ENCODE measurements at regions of chr2 and their contacts with region 1.

Region 1: DNA sequence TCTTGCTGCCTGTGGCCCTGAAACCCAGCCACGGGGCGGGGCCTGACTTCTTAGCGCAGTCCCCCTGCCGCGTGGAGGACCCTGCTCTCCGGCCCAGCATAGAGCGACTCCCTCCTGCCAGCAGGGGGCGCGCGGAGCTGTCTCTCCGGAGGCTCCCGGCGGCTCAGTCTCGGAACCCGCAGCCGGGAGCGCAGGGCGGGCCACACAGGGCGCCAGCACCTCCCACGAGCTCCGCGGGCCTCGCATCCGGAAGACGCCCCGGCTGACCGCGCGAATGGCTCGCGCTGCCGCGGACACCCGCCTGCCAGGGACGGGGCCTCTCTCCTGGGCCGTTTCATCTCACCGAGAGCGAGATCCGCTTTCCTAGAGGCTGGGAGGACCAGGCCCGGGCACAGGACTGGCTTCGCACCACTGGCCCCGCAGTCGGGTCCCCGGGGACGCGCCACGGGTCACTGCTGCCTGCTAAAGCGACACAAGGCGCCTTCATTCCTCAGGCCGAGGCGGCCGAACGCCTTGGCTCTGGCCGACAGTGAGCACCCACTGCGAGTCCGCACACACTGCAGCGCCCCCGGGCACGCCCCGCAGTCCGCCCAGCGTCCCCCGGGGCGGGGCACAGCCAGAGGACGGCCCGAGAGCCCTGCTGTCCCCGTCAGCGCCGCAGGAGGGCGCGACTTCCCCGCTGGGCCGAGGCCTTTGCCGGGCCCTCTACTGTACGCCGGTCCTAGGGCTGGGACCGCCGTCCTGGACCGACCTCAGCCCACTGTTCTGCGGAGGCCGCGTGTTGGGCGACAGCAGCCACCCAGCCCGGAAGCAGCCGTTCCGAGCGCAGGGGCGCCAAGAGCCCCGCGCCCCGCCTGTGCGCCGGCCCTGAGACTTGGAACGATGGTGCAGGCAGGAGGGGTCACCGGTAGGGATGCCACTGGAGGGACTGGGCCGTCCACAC is 39.0 kb upstream of the ARHGEF4 start:
- DNase-seq: peak; percentile 94
- H3K4me3 ChIP-seq: peak overlapping the region; percentile 66 to 86 (median 82)
- H3K27ac ChIP-seq: peak overlapping the region; percentile 89 to 98 (median 94)
- H3K4me1 ChIP-seq: peaks cover 11 to 19% (median 17%) of the 10 kb centered on the region in 4 donors
- H3K27me3 ChIP-seq: peaks cover 0 to 6% (median 0%) of the 10 kb centered on the region in 4 donors
- CTCF ChIP-seq: peak; percentile 82 to 89 (median 86)
- EP300 ChIP-seq: no peak
- POLR2A ChIP-seq: no peak

Region 2: DNA sequence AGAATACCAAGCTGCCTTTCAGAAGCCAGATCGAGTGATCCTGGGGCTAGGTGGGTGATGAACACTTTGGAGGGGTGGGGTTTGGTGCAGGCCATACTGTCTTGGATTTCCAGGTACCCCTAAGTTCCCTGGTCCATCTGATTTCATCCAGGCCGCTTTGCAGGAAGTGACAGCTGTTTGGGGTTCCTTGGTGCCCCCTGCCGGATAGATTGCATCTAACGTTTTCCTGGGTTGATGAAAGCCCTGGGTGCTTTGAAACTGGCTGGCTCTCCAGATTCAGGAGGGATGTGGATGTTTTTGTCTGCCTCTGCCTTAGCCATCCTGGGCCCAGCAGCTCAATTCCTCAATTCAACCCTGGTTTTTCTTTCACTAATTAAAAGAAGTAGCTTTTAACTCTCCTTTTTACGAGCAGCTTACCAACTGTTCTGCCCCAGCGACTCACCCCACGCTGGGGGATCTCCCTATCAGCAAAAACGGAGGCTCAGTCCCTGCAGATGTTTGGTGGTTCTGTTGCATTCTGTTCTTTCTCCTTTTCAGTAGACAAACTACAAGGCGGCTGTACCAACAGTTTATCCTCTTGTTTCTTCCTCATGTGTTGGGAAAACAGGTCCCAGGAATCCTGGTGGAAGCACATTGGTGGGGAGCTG is 76.1 kb after region 1 on chr2:
- intact Hi-C with region 1: loop called (anchors 1 kb)
- DNase-seq: no peak
- H3K4me3 ChIP-seq: no peak overlapping the region
- H3K27ac ChIP-seq: no peak overlapping the region
- H3K4me1 ChIP-seq: no peaks in the 10 kb centered on the region
- H3K27me3 ChIP-seq: peaks cover 0 to 9% (median 0%) of the 10 kb centered on the region in 4 donors
- CTCF ChIP-seq: peak; percentile 65 to 79 (median 71)
- EP300 ChIP-seq: no peak
- POLR2A ChIP-seq: no peak

Region 3: GRCh38 chr2:130920415-130921163 is 122.8 kb after region 1 on chr2:
- intact Hi-C with region 1: loop called (anchors 2 kb)
- DNase-seq: peak; percentile 92
- H3K4me3 ChIP-seq: no peak overlapping the region
- H3K27ac ChIP-seq: no peak overlapping the region
- H3K4me1 ChIP-seq: no peaks in the 10 kb centered on the region
- H3K27me3 ChIP-seq: peaks cover 0 to 23% (median 0%) of the 10 kb centered on the region in 4 donors
- CTCF ChIP-seq: peak; percentile 66 to 81 (median 78)
- EP300 ChIP-seq: no peak
- POLR2A ChIP-seq: no peak

Region 4: GRCh38 chr2:130963849-130964793 is 166.4 kb after region 1 on chr2:
- intact Hi-C with region 1: no loop called
- DNase-seq: no peak
- H3K4me3 ChIP-seq: peak overlapping the region; percentile 32 to 49 (median 38)
- H3K27ac ChIP-seq: no peak overlapping the region
- H3K4me1 ChIP-seq: peaks cover 0 to 19% (median 16%) of the 10 kb centered on the region in 4 donors
- H3K27me3 ChIP-seq: peaks cover 0 to 70% (median 17%) of the 10 kb centered on the region in 4 donors
- CTCF ChIP-seq: no peak
- EP300 ChIP-seq: no peak
- POLR2A ChIP-seq: no peak

Region 5: DNA sequence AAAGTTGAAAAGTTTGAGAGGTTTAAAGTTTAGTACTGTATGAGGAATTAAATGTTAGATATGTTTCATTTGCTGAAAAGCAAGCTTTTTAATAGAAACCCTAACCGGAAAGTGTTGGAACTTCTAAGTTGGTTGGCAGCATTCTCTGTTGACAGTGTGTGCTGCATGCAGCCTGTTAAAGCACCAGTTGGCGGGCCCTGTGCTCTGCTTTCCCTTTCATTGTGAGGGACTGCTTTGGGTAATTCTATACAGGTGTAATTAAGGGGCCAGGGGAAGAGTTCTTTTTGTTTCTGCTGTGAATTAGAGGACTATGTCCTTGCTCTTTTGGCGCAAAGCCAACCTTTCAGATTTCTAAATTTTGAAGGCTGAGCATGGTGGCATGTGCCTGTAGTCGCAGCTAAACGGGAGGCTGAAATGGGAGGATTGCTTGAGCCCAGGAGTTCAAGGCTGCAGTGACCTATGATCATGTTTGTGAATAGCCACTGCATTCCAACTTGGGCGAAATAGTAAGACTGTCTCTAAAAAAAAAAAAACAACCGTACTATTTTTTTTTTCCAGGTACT is 327.5 kb after region 1 on chr2:
- intact Hi-C with region 1: no loop called
- DNase-seq: no peak
- H3K4me3 ChIP-seq: no peak overlapping the region
- H3K27ac ChIP-seq: no peak overlapping the region
- H3K4me1 ChIP-seq: no peaks in the 10 kb centered on the region
- H3K27me3 ChIP-seq: no peaks in the 10 kb centered on the region
- CTCF ChIP-seq: no peak
- EP300 ChIP-seq: no peak
- POLR2A ChIP-seq: no peak

Region 6: DNA sequence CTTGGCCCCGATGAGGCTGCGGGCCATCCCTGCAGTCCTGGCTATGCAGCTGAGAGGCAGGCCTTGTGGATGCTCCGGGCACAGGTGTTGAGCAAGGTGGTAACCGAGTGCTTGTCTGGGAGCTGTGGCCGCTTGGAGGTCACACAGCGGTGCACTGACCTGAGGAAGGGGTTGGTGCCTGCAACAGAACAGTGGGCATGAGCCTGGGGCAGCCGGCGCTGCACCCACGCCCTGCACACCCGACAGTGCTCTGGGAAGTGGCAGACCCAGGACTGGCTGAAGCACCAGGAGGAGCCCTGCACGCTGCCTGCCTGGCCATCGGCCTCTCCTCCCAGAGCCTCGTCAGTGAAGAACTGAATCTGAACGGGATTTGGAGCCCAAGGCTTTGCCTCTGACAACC is 403.3 kb after region 1 on chr2:
- intact Hi-C with region 1: no loop called
- DNase-seq: no peak
- H3K4me3 ChIP-seq: no peak overlapping the region
- H3K27ac ChIP-seq: no peak overlapping the region
- H3K4me1 ChIP-seq: no peaks in the 10 kb centered on the region
- H3K27me3 ChIP-seq: peaks cover 0 to 11% (median 0%) of the 10 kb centered on the region in 4 donors
- CTCF ChIP-seq: no peak
- EP300 ChIP-seq: no peak
- POLR2A ChIP-seq: no peak